ENCODE measurements at regions of chr4 and their contacts with region 1.

Region 1: GRCh38 chr4:185597532-185598188 is 62.4 kb upstream of the PDLIM3 start:
- DNase-seq: peak in 3 of 4 donors; percentile 52 to 88 (median 75)
- ATAC-seq: peak; percentile 96
- H3K4me3 ChIP-seq: no peak overlapping the region
- H3K27ac ChIP-seq: no peak overlapping the region
- H3K4me1 ChIP-seq: no peaks in the 10 kb centered on the region
- H3K27me3 ChIP-seq: no peaks in the 10 kb centered on the region
- CTCF ChIP-seq: peak; percentile 90 to 99

Region 2: DNA sequence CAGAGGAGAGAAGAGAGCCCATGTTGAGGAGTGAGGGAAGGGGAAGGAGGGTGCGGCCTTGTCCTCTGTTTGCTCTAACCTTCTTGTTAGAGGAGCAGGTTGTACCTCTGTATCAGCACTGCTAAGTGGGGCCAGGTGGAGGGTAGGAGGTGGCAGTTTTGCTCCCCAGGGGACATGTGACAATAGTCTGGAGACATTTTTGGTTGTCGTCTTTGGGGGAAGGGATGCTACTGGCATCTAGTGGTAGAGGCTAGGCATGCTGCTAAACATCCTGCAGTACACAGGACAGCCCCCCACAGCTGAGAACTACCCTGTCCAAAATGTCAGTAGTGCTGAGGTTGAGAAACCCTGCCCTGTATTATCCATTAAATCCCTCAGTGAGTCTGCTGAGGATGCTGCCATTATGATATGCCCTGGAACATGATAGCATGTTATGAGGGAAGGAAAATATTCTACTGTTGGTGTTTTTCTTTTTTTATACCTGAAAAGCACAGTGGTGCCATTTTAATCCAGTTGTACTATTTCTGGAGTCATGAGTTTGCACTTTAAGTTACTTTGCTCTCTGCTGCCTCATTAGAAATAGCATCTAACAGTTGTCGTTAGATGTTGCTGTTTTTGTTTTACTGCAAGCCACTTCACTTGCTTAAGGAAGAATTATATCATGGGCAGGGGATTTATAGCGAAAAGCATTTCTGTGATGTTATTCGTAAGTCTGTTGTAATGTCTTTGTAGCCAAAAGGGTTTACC is 292.5 kb before region 1 on chr4:
- intact Hi-C with region 1: loop called in 1 of 2 experiments (anchors 10 kb)
- DNase-seq: peak in 2 of 4 donors; percentile 37 to 63
- ATAC-seq: peak; percentile 56
- H3K4me3 ChIP-seq: no peak overlapping the region
- H3K27ac ChIP-seq: peak overlapping the region; percentile 69 to 75
- H3K4me1 ChIP-seq: peaks cover 0 to 4% of the 10 kb centered on the region in 2 donors
- H3K27me3 ChIP-seq: no peaks in the 10 kb centered on the region
- CTCF ChIP-seq: peak in 1 of 2 donors; percentile 21

Region 3: GRCh38 chr4:185471235-185472102 is 126.2 kb before region 1 on chr4 and contains the start of gene CCDC110:
- intact Hi-C with region 1: loop called in 1 of 2 experiments (anchors 10 kb)
- DNase-seq: peak; percentile 93 to 98 (median 96)
- ATAC-seq: peak; percentile 98
- H3K4me3 ChIP-seq: peak within 1 kb of the TSS; percentile 70 to 89
- H3K27ac ChIP-seq: peak within 1 kb of the TSS; percentile 26 to 50
- H3K4me1 ChIP-seq: peaks cover 0 to 6% of the 10 kb centered on the region in 2 donors
- H3K27me3 ChIP-seq: peaks cover 0 to 43% of the 10 kb centered on the region in 2 donors
- CTCF ChIP-seq: peak; percentile 49 to 72
- polyA plus RNA-seq, gene CCDC110: 2.3 to 3.5 (median 3.0) TPM

Measured in left lung (tissue), 14 donors.